ENCODE measurements at regions of chr15 and their contacts with region 1.

Region 1: GRCh38 chr15:60362321-60363086 is 35.3 kb downstream of the ANXA2 start:
- DNase-seq: peak; percentile 74
- H3K4me3 Mint-ChIP-seq: peak overlapping the region; percentile 5
- H3K27ac Mint-ChIP-seq: peak overlapping the region; percentile 93
- H3K4me1 Mint-ChIP-seq: peaks cover 41% of the 10 kb centered on the region
- H3K27me3 Mint-ChIP-seq: no peaks in the 10 kb centered on the region
- CTCF ChIP-seq: no peak

Region 2: GRCh38 chr15:60351066-60351465 is 11.4 kb before region 1 on chr15:
- CTCF ChIA-PET with region 1: interaction called, 14 read pairs
- POLR2A ChIA-PET with region 1: interaction called, 25 read pairs
- intact Hi-C with region 1: no loop called
- DNase-seq: no peak
- H3K4me3 Mint-ChIP-seq: no peak overlapping the region
- H3K27ac Mint-ChIP-seq: no peak overlapping the region
- H3K4me1 Mint-ChIP-seq: peaks cover 31% of the 10 kb centered on the region
- H3K27me3 Mint-ChIP-seq: no peaks in the 10 kb centered on the region
- CTCF ChIP-seq: no peak

Region 3: DNA sequence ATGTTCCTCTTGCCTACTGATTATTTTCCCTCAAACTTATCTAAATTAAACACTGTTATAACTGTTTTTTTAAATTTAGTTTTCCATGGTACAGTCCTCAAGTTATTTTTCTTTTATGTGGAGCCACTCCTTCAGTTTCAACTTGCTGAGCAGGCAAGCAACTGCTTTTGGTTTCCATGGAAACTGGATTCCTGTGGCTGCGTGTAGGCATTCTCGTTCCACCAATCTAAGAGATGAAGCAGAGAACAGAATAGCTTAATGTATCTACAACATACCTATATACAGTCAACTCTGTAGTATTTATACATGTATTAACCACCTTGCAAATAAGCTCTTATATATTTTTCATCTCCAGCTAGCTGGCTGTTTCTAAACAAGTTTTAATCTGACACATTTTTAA is 61.0 kb after region 1 on chr15:
- CTCF ChIA-PET with region 1: interaction called, 5 read pairs
- POLR2A ChIA-PET with region 1: interaction called, 17 read pairs
- intact Hi-C with region 1: no loop called
- DNase-seq: peak; percentile 66
- H3K4me3 Mint-ChIP-seq: peak overlapping the region; percentile 50
- H3K27ac Mint-ChIP-seq: peak overlapping the region; percentile 92
- H3K4me1 Mint-ChIP-seq: peaks cover 35% of the 10 kb centered on the region
- H3K27me3 Mint-ChIP-seq: no peaks in the 10 kb centered on the region
- CTCF ChIP-seq: no peak

Region 4: DNA sequence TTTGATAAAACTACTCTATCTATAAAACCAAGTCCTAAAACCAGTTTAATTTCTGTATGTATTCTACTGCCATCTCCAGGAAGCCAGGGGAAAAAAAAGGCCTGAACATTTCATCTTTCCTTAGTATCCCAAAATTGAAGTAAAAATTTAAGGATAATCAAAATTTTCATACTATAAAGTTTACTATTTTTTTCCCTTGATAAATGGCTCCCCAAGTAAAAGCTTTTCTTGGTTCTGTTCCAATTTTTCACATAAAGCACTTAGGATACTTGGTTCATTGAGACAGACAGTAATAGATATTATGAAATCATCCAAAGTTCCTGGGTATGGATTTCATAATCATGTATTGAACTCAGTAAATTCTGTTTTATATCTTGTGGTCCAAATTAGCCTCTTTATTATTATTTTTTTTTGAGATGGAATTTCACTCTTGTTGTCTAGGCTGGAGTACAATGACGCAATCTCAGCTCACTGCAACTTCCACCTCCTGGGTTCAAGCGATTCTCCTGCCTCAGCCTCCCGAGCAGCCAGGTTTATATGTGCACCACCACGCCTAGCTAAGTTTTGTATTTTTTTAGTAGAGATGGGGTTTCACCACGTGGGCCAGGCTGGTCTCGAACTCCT is 81.9 kb after region 1 on chr15:
- CTCF ChIA-PET with region 1: interaction called, 34 read pairs
- POLR2A ChIA-PET with region 1: interaction called, 10 read pairs
- intact Hi-C with region 1: loop called (anchors 1 kb)
- DNase-seq: peak; percentile 50
- H3K4me3 Mint-ChIP-seq: no peak overlapping the region
- H3K27ac Mint-ChIP-seq: peak overlapping the region; percentile 39
- H3K4me1 Mint-ChIP-seq: peaks cover 5% of the 10 kb centered on the region
- H3K27me3 Mint-ChIP-seq: no peaks in the 10 kb centered on the region
- CTCF ChIP-seq: peak; percentile 45

Region 5: DNA sequence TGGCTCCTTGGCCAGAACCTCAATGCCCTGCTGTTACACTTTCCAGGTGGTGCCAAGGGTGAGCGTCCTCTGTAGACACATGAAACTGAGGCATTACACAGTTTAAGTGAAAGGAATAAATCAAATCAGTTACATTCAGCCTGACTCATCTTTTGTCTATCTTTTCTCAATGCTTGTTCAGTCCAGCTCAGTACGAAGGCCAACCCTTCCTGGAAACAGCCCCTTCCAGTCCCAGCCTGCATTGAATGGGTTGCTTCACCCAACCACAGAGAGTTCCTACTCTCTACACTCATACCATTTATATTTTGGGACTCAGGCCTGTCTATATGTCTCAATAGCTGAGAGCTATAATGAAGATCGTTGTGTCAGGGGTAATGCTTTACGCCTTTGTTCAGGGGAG is 503.0 kb after region 1 on chr15:
- CTCF ChIA-PET with region 1: no interaction called
- POLR2A ChIA-PET with region 1: no interaction called
- intact Hi-C with region 1: no loop called
- DNase-seq: peak; percentile 90
- H3K4me3 Mint-ChIP-seq: no peak overlapping the region
- H3K27ac Mint-ChIP-seq: no peak overlapping the region
- H3K4me1 Mint-ChIP-seq: peaks cover 8% of the 10 kb centered on the region
- H3K27me3 Mint-ChIP-seq: peaks cover 17% of the 10 kb centered on the region
- CTCF ChIP-seq: no peak